Activated T-helper 2 cell treated with anti-CD3 and anti-CD28 coated beads, Interferon-gamma antibody, Interleukin-2, Interleukin-4, amounts not matched to agents 10 μg/mL and 5 μg/mL and 100 μg/mL, durations not matched to agents 14 hours and 24 hours and 36 hours (primary cell): ENCODE measurements at regions of chr1 and their contacts with region 1.

Region 1: GRCh38 chr1:23559136-23559984 is at the start of gene ID3:
- DNase-seq: peak; percentile 94
- H3K4me3 Mint-ChIP-seq: peak within 1 kb of the TSS; percentile 91
- H3K27ac Mint-ChIP-seq: peak within 1 kb of the TSS; percentile 66
- H3K4me1 Mint-ChIP-seq: peaks cover 68% of the 10 kb centered on the region
- H3K27me3 Mint-ChIP-seq: peaks cover 41% of the 10 kb centered on the region
- total RNA-seq, gene ID3: 24.7 and 26.9 TPM in 2 replicates

Region 2: GRCh38 chr1:23530747-23531561 is 28.4 kb before region 1 on chr1 and contains the start of gene E2F2:
- intact Hi-C with region 1: loop called (anchors 2 kb)
- DNase-seq: peak; percentile 78
- H3K4me3 Mint-ChIP-seq: peak within 1 kb of the TSS; percentile 95
- H3K27ac Mint-ChIP-seq: peak within 1 kb of the TSS; percentile 96
- H3K4me1 Mint-ChIP-seq: peaks cover 67% of the 10 kb centered on the region
- H3K27me3 Mint-ChIP-seq: no peaks in the 10 kb centered on the region
- total RNA-seq, gene E2F2: 17.2 and 18.6 TPM in 2 replicates

Region 3: DNA sequence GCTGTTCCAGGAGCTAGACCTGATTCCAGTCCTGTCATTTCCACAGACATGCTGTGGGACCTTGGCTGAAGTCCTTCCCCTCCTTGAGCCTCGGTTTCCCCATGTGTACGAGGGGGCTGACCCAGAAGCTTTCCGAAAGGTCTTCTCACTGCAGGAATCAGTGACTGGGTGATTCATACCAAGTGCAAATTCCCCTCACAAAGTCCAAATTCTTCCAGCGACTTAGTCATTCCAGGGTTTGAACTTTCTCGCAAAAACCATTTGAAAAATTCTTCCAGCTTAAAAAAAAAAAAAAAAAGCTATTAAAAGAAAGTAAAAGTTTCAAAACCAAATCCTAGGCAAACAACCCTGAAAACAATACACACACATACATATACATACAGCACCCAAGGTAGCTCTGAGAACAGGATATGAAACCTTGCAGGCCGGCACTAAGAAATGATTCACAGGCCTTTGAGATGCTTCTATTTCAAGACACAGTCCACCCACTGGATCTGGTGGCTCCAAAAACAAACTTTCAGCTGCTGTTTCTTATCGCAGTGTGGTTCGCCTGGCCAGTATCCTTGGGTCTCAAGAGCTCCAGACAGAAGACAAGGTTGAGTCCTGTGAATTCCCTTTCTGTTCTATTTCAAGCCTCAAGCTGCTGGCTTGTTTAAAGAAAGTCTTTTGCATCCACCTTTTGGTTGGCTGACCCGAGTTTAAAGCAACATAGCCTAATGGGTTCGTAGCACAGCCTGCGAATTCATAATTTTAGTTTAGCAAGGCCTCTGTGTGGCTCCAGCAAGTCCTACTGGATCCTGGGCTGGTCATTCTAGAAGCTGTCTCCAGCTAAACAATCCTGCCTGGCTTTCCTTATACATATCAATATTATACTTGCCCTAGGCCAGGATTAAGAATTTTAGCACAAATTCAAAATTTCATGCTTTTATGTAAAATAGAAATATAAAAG is 18.0 kb after region 1 on chr1:
- intact Hi-C with region 1: loop called (anchors 1 kb)
- DNase-seq: no peak
- H3K4me3 Mint-ChIP-seq: peak overlapping the region; percentile 60
- H3K27ac Mint-ChIP-seq: peak overlapping the region; percentile 71
- H3K4me1 Mint-ChIP-seq: peaks cover 27% of the 10 kb centered on the region
- H3K27me3 Mint-ChIP-seq: no peaks in the 10 kb centered on the region

Region 4: DNA sequence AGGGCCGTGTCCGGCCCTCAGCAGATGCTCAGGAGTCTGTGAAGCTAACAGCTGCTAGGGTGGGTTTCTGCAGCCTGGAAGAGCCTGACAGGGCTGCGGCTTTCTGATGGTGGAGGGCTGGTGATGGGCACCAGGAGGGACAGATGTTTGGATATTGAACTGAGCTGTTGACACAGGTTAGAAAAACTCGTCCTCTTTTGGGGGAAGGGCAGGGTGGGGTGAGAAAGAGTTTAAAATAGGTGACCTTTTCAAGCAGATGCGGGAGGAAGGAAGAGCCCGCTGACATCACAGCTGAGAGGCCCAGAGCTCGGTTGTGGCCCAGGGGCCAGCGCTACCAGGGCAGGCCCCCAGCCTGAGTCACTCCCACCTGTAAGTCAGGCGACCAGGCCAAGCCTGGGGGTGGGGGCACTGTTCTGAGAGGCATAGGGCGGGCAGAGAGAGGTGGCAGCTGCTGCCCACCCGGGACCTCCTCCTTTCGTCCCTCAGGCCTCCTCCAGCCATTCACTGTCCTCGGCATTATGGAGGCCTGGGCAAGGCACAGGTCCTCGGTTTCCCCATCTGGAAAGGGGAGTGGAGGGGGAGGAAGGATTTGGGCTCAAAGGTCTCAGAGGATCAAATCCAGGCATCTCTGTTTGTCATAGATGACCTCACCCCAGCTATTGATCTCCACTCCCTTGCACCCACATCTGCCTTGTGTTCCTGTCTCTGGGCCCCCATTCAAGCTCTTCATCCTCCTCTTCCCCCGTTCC is 32.3 kb after region 1 on chr1:
- intact Hi-C with region 1: loop called (anchors 1 kb)
- DNase-seq: no peak
- H3K4me3 Mint-ChIP-seq: peak overlapping the region; percentile 51
- H3K27ac Mint-ChIP-seq: peak overlapping the region; percentile 95
- H3K4me1 Mint-ChIP-seq: peaks cover 45% of the 10 kb centered on the region
- H3K27me3 Mint-ChIP-seq: no peaks in the 10 kb centered on the region

Region 5: GRCh38 chr1:23613191-23614031 is 54.1 kb after region 1 on chr1:
- intact Hi-C with region 1: loop called (anchors 2 kb)
- DNase-seq: peak; percentile 58
- H3K4me3 Mint-ChIP-seq: peak overlapping the region; percentile 7
- H3K27ac Mint-ChIP-seq: peak overlapping the region; percentile 84
- H3K4me1 Mint-ChIP-seq: peaks cover 55% of the 10 kb centered on the region
- H3K27me3 Mint-ChIP-seq: no peaks in the 10 kb centered on the region